MCF 10A (cell line): ENCODE measurements at regions of chr10 and their contacts with region 1.

Region 1: GRCh38 chr10:98309366-98310355 is 41.7 kb upstream of the LOXL4 start:
- DNase-seq: peak; percentile 69
- H3K4me3 Mint-ChIP-seq: no peak overlapping the region
- H3K27ac Mint-ChIP-seq: no peak overlapping the region
- H3K4me1 Mint-ChIP-seq: peaks cover 6% of the 10 kb centered on the region
- H3K27me3 Mint-ChIP-seq: peaks cover 8% of the 10 kb centered on the region
- CTCF ChIP-seq: peak; percentile 81

Region 2: GRCh38 chr10:98170249-98171117 is 139.2 kb before region 1 on chr10:
- CTCF ChIA-PET with region 1: interaction called, 93 read pairs
- POLR2A ChIA-PET with region 1: no interaction called
- intact Hi-C with region 1: loop called (anchors 1 kb)
- DNase-seq: peak; percentile 61
- H3K4me3 Mint-ChIP-seq: no peak overlapping the region
- H3K27ac Mint-ChIP-seq: peak overlapping the region; percentile 35
- H3K4me1 Mint-ChIP-seq: no peaks in the 10 kb centered on the region
- H3K27me3 Mint-ChIP-seq: no peaks in the 10 kb centered on the region
- CTCF ChIP-seq: peak; percentile 59

Region 3: DNA sequence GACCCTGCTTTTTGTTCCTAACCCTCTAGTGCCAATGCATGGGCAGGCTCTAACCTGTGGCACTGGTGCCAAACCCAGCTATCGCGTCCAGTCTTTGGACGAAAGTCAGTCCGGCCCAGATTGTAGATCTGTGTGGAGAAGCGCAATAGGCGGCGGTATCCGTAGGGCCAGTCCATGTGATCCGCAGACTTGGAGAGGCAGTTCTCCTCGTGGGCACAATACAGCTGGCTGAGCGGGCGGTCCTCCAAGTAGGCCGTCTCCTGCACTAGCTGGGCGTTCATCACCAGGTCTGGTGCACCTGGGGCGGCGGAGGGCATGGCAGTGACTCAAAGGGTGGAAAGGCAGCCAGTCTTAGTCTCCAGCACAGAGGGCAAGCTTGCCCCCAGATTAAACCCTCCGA is 56.2 kb before region 1 on chr10:
- CTCF ChIA-PET with region 1: interaction called, 52 read pairs
- POLR2A ChIA-PET with region 1: no interaction called
- intact Hi-C with region 1: no loop called
- DNase-seq: no peak
- H3K4me3 Mint-ChIP-seq: no peak overlapping the region
- H3K27ac Mint-ChIP-seq: no peak overlapping the region
- H3K4me1 Mint-ChIP-seq: no peaks in the 10 kb centered on the region
- H3K27me3 Mint-ChIP-seq: no peaks in the 10 kb centered on the region
- CTCF ChIP-seq: no peak

Region 4: GRCh38 chr10:98269072-98269912 is 40.4 kb before region 1 on chr10:
- CTCF ChIA-PET with region 1: interaction called, 55 read pairs
- POLR2A ChIA-PET with region 1: no interaction called
- intact Hi-C with region 1: no loop called
- DNase-seq: peak; percentile 75
- H3K4me3 Mint-ChIP-seq: no peak overlapping the region
- H3K27ac Mint-ChIP-seq: no peak overlapping the region
- H3K4me1 Mint-ChIP-seq: peaks cover 18% of the 10 kb centered on the region
- H3K27me3 Mint-ChIP-seq: no peaks in the 10 kb centered on the region
- CTCF ChIP-seq: no peak

Region 5: GRCh38 chr10:98295907-98296306 is 13.8 kb before region 1 on chr10:
- CTCF ChIA-PET with region 1: interaction called, 18 read pairs
- POLR2A ChIA-PET with region 1: interaction called, 5 read pairs
- intact Hi-C with region 1: no loop called
- DNase-seq: peak; percentile 11
- H3K4me3 Mint-ChIP-seq: no peak overlapping the region
- H3K27ac Mint-ChIP-seq: no peak overlapping the region
- H3K4me1 Mint-ChIP-seq: peaks cover 20% of the 10 kb centered on the region
- H3K27me3 Mint-ChIP-seq: peaks cover 12% of the 10 kb centered on the region
- CTCF ChIP-seq: no peak

Region 6: DNA sequence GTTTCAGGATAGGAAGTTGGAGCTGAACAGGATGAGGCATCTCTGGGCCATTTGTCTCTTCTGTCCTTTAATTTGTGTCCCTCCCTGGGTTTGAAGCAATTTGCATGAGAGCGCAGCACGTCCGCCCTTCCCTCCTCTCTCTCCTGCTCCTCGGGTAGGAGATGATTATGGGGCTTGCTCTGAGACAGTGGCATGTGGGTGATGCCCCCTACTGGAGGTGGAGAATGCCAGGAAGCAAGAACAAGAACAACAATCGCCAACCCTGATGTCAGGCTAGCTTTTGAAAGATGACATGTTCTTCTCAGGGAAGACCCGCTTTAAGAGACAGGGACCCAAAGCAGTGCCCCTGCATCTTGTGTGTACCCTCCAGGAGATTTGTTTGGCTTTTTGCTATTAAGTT is 22.2 kb after region 1 on chr10:
- CTCF ChIA-PET with region 1: interaction called, 17 read pairs
- POLR2A ChIA-PET with region 1: interaction called, 3 read pairs
- intact Hi-C with region 1: no loop called
- DNase-seq: peak; percentile 45
- H3K4me3 Mint-ChIP-seq: no peak overlapping the region
- H3K27ac Mint-ChIP-seq: no peak overlapping the region
- H3K4me1 Mint-ChIP-seq: no peaks in the 10 kb centered on the region
- H3K27me3 Mint-ChIP-seq: peaks cover 11% of the 10 kb centered on the region
- CTCF ChIP-seq: peak; percentile 30

Region 7: GRCh38 chr10:98910048-98910447 is 600.4 kb after region 1 on chr10:
- CTCF ChIA-PET with region 1: no interaction called
- POLR2A ChIA-PET with region 1: no interaction called
- intact Hi-C with region 1: no loop called
- DNase-seq: no peak
- H3K4me3 Mint-ChIP-seq: no peak overlapping the region
- H3K27ac Mint-ChIP-seq: no peak overlapping the region
- H3K4me1 Mint-ChIP-seq: no peaks in the 10 kb centered on the region
- H3K27me3 Mint-ChIP-seq: no peaks in the 10 kb centered on the region
- CTCF ChIP-seq: no peak